Activated CD4-positive, alpha-beta memory T cell treated with anti-CD3 and anti-CD28 coated beads for 36 hours (primary cell): ENCODE measurements at regions of chr7 and their contacts with region 1.

Region 1: GRCh38 chr7:50206453-50207250 is 97.9 kb upstream of the IKZF1 start:
- DNase-seq: peak; percentile 86
- H3K4me3 Mint-ChIP-seq: peak overlapping the region; percentile 50
- H3K27ac Mint-ChIP-seq: peak overlapping the region; percentile 86
- H3K4me1 Mint-ChIP-seq: peaks cover 84% of the 10 kb centered on the region
- H3K27me3 Mint-ChIP-seq: no peaks in the 10 kb centered on the region

Region 2: DNA sequence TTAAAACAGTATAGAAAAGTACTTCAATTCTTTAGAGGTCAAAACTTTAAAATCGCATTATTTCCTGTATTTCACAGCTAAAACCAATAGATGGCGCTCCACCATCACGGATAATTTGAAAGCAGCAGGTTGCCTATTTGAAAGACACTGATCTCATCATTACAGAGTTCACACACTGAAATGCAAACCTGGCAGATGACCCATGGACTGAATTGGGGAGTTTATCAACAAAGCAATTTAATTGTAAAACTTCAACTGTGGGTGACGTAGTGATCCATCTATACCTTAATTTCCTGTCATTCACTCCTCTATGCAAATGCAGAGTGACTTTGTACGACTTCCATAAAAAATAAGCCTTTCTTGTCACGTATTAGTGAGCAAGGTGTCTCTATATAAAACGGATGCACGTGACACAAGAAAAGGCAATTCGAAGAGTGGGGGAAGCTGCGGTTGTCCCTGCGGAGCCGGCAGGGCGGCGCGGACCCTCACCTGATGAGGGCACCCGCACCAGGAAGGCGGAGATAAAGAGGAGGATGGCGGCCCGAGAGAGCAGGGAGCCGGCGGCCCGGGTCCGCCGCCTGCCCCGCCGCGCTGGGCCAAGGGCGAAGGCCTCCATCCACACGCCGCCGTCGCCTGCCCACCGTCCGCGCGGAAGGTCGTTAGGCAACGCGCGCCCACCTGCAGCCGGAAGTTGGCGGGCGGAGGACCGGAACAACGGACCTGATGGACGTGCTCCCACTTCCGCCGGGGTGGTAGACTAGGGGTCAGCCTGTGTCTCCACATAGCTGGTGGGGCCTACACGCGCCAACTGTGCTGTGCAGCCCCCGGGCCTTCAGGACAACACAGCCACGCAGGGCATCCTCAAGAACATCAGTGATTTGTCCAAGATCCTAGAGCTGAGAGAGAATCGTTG is 113.8 kb before region 1 on chr7 and contains the start of gene ZPBP:
- CTCF ChIA-PET with region 1: interaction called, 6 read pairs
- POLR2A ChIA-PET with region 1: interaction called, 3 read pairs
- intact Hi-C with region 1: loop called (anchors 5 kb)
- DNase-seq: peak; percentile 59
- H3K4me3 Mint-ChIP-seq: peak within 1 kb of the TSS; percentile 75
- H3K27ac Mint-ChIP-seq: peak within 1 kb of the TSS; percentile 62
- H3K4me1 Mint-ChIP-seq: peaks cover 8% of the 10 kb centered on the region
- H3K27me3 Mint-ChIP-seq: no peaks in the 10 kb centered on the region
- total RNA-seq, gene ZPBP: not detected

Region 3: DNA sequence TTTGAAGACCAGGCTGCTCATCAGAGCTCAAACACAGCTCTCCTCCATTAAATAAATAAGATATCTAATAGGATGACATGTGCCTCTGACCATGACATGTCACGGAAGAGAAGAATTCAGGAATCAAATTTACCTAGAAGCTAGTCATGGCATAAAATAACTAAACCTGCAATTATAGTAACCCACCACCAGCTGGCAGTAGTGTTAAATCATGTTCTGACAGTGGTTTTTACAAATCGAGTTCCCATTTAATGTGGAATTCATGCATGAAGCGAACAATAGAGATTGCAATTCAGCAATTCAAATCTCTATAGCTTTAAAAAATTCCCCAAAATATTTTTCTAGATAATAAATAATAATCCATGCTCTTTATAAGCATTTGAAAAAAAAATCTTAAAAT is 23.3 kb after region 1 on chr7:
- CTCF ChIA-PET with region 1: interaction called, 42 read pairs
- POLR2A ChIA-PET with region 1: interaction called, 7 read pairs
- intact Hi-C with region 1: loop called (anchors 1 kb)
- DNase-seq: no peak
- H3K4me3 Mint-ChIP-seq: no peak overlapping the region
- H3K27ac Mint-ChIP-seq: no peak overlapping the region
- H3K4me1 Mint-ChIP-seq: peaks cover 36% of the 10 kb centered on the region
- H3K27me3 Mint-ChIP-seq: no peaks in the 10 kb centered on the region

Region 4: GRCh38 chr7:50317221-50317678 is 110.6 kb after region 1 on chr7:
- CTCF ChIA-PET with region 1: interaction called, 159 read pairs
- POLR2A ChIA-PET with region 1: interaction called, 7 read pairs
- intact Hi-C with region 1: loop called (anchors 1 kb)
- DNase-seq: peak; percentile 75
- H3K4me3 Mint-ChIP-seq: peak overlapping the region; percentile 86
- H3K27ac Mint-ChIP-seq: peak overlapping the region; percentile 94
- H3K4me1 Mint-ChIP-seq: peaks cover 92% of the 10 kb centered on the region
- H3K27me3 Mint-ChIP-seq: no peaks in the 10 kb centered on the region

Region 5: DNA sequence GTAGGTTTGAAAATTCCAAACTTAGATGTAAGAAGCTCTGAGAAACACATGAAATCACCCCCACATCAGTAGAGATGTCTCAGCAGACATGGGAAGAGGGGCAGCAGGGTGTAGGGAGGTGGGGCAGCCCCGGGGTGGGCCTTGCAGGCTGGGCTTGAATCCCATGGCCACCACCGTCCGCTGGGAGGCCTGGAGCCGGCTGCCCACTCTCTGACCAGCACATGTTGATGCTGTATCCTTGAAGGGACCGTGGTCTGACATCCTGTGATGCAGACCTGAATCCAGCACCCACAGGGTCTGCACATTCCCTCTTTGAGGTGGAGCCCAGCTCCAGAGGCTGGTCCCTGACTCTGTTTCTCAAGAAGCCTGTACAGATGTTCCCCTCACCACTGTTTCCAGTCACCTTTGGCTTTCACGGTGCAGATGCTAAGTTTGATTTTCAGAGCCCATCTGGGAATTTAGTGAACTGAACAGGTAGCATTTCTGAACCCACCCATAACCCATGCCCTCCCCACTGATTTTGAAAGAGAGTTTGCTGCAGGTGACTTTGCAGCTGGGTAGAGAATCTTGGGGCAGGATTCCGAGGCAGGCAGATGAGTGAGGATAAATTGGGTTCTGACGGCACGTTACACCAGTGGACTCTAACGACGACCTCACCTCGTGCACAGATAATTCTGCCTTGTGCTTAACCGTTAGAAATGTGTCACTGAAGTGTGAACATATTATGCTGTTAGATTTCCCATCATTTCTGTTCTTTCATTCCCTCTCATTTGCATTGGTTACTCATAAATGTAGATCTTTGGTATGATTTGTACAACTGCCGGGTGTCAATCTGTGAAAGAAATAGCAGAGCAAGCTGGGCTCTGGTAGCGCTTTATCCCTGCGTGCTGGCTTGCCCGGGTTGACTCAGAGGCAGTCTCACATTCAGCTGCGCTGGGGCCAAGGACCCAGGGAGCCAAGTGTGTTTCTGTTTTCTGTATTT is 143.6 kb after region 1 on chr7:
- CTCF ChIA-PET with region 1: interaction called, 32 read pairs
- POLR2A ChIA-PET with region 1: interaction called, 19 read pairs
- intact Hi-C with region 1: loop called (anchors 1 kb)
- DNase-seq: peak; percentile 94
- H3K4me3 Mint-ChIP-seq: peak overlapping the region; percentile 14
- H3K27ac Mint-ChIP-seq: peak overlapping the region; percentile 92
- H3K4me1 Mint-ChIP-seq: peaks cover 98% of the 10 kb centered on the region
- H3K27me3 Mint-ChIP-seq: no peaks in the 10 kb centered on the region

Region 6: GRCh38 chr7:50397320-50397970 is 190.8 kb after region 1 on chr7:
- CTCF ChIA-PET with region 1: interaction called, 13 read pairs
- POLR2A ChIA-PET with region 1: interaction called, 3 read pairs
- intact Hi-C with region 1: loop called (anchors 1 kb)
- DNase-seq: peak; percentile 50
- H3K4me3 Mint-ChIP-seq: peak overlapping the region; percentile 20
- H3K27ac Mint-ChIP-seq: peak overlapping the region; percentile 84
- H3K4me1 Mint-ChIP-seq: peaks cover 79% of the 10 kb centered on the region
- H3K27me3 Mint-ChIP-seq: no peaks in the 10 kb centered on the region

Region 7: DNA sequence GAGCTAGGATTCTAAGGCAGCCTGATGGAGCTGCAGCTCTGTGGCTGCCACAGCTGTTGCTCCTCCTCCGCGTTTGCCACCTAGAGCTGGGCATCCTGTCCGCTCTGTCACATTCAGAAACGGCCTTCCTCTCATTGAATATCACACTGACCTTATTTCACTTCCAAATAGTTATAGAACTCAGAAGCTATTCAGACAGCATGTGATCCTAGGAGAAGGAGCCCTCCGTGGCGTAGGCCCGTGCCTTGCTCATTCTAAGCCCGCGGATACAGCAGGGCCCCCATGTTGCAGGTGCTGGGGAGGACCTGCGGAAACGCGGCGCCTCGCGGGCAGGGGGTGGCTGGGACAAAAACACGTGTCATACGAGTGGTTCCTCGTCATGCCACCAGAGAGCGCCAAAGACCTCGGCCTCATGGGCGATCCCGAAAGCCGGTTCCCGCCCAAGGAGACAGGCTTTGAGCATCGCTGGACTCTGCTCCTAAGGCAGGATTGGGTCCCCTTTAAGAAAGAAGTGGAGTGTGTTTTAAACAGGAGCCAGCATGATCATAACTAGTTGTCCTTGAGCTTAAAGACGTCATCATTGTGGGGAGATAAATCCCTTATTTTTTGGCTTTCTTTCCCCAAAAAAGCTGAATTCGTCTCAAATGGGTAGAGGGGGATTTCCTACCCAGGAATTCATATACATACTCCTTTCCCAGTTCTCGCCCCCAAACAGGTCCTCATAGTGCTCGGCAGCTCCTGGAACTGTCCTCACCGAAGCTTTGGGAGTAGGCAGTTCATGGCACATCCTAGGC is 261.4 kb after region 1 on chr7:
- CTCF ChIA-PET with region 1: interaction called, 5 read pairs
- POLR2A ChIA-PET with region 1: no interaction called
- intact Hi-C with region 1: loop called (anchors 5 kb)
- DNase-seq: peak; percentile 89
- H3K4me3 Mint-ChIP-seq: no peak overlapping the region
- H3K27ac Mint-ChIP-seq: no peak overlapping the region
- H3K4me1 Mint-ChIP-seq: peaks cover 12% of the 10 kb centered on the region
- H3K27me3 Mint-ChIP-seq: peaks cover 2% of the 10 kb centered on the region